ENCODE measurements at regions of chr5 and their contacts with region 1.

Region 1: GRCh38 chr5:139422307-139422893 is 16.9 kb downstream of the DNAJC18 start:
- DNase-seq: peak in 1 of 2 donors; percentile 74
- H3K4me3 ChIP-seq: no peak overlapping the region
- H3K27ac ChIP-seq: no peak overlapping the region
- H3K4me1 ChIP-seq: peaks cover 0 to 14% of the 10 kb centered on the region in 2 donors
- H3K27me3 ChIP-seq: no peaks in the 10 kb centered on the region
- CTCF ChIP-seq: peak; percentile 79 to 84 (median 80)

Region 2: DNA sequence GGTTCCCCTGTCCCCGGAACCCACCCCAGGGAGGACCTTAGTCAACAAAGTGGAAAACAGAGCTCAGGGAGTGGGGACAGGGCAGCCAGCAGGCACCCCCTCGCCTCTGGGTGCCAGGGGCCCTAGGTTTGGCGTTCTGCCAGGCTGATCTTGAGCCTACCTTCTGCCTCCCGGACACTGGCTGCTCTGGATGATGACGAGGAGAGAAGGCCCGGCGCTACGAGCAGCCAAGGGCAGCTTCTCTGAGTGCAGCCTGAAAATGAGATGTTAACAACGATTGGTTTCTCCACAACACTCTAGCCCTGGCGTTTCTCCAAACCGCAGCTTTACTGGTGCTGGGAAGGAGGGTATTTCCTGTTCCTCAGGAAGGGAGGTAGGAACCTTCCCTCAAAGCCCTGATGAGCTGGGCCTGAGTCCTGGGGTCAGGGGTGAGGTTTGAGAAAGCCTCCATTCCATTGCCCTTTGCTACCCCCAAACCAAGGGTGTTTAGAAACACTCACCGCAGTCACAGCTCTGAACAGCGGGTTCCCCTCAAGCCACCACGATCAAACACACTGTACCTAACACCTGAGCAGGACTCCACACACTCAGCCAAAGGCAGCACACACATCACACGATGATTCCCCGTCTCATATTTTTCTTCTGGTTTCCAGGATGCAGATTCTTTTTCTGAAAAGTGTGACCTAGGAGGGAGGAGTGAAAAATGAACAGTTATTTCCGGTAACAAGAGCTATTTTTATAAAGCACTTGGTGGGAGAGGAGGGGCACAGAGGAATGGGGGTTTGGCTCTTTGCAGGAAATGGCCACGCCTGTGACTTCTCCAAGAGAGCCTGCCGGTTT is 59.9 kb after region 1 on chr5 and contains the start of gene STING1:
- intact Hi-C with region 1: loop called (anchors 2 kb)
- DNase-seq: peak; percentile 53 to 93
- H3K4me3 ChIP-seq: peak within 1 kb of the TSS; percentile 64 to 74
- H3K27ac ChIP-seq: peak within 1 kb of the TSS; percentile 96 to 98
- H3K4me1 ChIP-seq: peaks cover 4 to 27% of the 10 kb centered on the region in 2 donors
- H3K27me3 ChIP-seq: no peaks in the 10 kb centered on the region
- CTCF ChIP-seq: no peak
- total RNA-seq, gene STING1: 179 TPM

Region 3: GRCh38 chr5:139517683-139518564 is 95.5 kb after region 1 on chr5:
- intact Hi-C with region 1: loop called (anchors 1 kb)
- DNase-seq: peak; percentile 62 to 96
- H3K4me3 ChIP-seq: peak overlapping the region; percentile 66 to 68
- H3K27ac ChIP-seq: peak overlapping the region; percentile 77 to 83
- H3K4me1 ChIP-seq: peaks cover 0 to 2% of the 10 kb centered on the region in 2 donors
- H3K27me3 ChIP-seq: no peaks in the 10 kb centered on the region
- CTCF ChIP-seq: peak; percentile 95 to 99 (median 98)

Region 4: DNA sequence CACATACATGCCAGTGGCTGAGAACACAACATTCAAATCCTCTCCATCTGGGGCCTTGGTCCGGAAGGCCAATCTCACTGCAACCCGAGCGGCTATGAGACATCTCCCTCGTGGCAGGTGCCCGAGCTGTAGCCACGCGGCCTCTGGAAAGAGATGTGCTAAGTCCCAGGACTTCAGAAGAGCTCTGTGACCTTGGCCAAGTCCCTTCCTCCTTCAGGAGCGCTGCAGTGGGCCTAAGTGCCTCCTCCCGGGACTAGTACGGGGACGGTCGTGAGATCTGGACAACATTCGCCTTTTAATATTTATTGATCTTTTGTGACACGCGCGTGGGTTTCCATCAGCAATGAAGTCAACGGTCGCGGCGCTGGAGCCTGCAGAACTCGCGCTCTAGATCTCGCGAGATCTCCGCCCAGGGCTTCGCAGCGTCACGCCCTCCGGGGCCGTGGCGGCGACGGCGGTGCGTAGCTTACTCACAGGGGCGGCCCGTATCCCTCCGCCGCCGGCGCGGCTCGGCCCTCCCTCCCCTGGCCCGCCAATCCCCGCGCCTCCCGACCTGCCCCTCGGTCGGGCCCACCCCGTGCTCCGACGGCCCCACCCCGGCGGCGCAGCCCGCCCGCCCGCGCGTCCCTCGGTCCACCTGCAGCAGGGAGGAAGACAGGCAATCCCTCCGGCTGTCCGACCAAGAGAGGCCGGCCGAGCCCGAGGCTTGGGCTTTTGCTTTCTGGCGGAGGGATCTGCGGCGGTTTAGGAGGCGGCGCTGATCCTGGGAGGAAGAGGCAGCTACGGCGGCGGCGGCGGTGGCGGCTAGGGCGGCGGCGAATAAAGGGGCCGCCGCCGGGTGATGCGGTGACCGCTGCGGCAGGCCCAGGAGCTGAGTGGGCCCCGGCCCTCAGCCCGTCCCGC is 138.6 kb after region 1 on chr5 and contains the start of gene UBE2D2:
- intact Hi-C with region 1: loop called (anchors 5 kb)
- DNase-seq: peak; percentile 78 to 98
- H3K4me3 ChIP-seq: peak within 1 kb of the TSS; percentile 86 to 91
- H3K27ac ChIP-seq: peak within 1 kb of the TSS; percentile 96 to 99
- H3K4me1 ChIP-seq: peaks cover 14 to 38% of the 10 kb centered on the region in 2 donors
- H3K27me3 ChIP-seq: no peaks in the 10 kb centered on the region
- CTCF ChIP-seq: no peak
- total RNA-seq, gene UBE2D2: 65.9 TPM

Region 5: GRCh38 chr5:139593716-139594319 is 171.4 kb after region 1 on chr5:
- intact Hi-C with region 1: no loop called
- DNase-seq: no peak
- H3K4me3 ChIP-seq: no peak overlapping the region
- H3K27ac ChIP-seq: peak overlapping the region; percentile 8 to 33
- H3K4me1 ChIP-seq: peaks cover 0 to 9% of the 10 kb centered on the region in 2 donors
- H3K27me3 ChIP-seq: no peaks in the 10 kb centered on the region
- CTCF ChIP-seq: no peak

Region 6: GRCh38 chr5:139765409-139766217 is 343.2 kb after region 1 on chr5:
- intact Hi-C with region 1: loop called (anchors 10 kb)
- DNase-seq: peak in 1 of 2 donors; percentile 84
- H3K4me3 ChIP-seq: peak overlapping the region; percentile 47 to 67
- H3K27ac ChIP-seq: no peak overlapping the region
- H3K4me1 ChIP-seq: peaks cover 0 to 7% of the 10 kb centered on the region in 2 donors
- H3K27me3 ChIP-seq: peaks cover 8% of the 10 kb centered on the region
- CTCF ChIP-seq: peak; percentile 94 to 99 (median 99)

Measured in ascending aorta (tissue), 2 donors.